ENCODE measurements at regions of chr7 and their contacts with region 1.

Region 1: DNA sequence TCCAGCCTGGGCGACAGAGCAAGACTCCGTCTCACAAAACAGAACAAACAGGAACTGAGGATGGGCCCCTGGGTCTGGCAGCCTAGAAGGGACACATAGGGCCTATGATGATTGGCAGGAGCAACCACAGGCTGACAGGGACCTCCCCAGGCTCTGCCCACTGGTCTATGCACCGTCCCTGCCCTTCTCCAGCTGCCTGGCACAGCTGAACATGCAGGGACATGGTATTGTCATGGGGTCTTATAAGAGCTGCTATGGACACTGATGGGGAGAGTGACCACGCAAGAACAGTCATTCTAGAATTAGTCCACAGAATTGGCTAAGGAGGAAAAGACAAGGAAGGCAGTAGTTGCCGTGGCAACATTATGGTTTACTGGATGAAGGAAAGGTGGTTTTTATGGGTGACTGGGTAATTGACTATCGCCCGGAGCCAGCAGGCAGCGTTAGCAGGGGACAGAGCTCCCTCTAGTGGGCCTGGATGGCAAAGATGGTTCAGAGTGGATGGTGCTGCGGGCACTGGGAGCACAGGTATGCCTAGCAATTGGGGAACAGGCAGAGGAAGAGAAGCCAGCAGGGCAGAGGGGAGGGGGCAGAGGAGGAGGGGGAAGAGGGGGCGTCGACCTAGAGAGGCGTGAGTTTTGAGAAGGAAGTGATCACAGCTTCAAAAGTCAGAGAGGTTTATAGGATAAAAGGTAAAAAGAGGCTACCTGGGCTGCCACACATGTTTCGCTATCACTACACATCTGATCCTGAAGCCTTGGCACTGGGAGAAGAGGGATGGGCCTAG is 7.8 kb upstream of the TRIM56 start:
- DNase-seq: peak; percentile 78 to 85
- ATAC-seq: peak; percentile 99 to 100
- H3K4me3 ChIP-seq: no peak overlapping the region
- H3K27ac ChIP-seq: 0 out of 6 replicates have a peak overlapping the region, but pooled peaks of 1 of the 2 experiments have one; percentile 12
- H3K4me1 ChIP-seq: no peaks in the 10 kb centered on the region
- CTCF ChIP-seq: peak; percentile 91
- EP300 ChIP-seq: no peak
- POLR2A ChIP-seq: no peak
- RAD21 ChIP-seq: peak; percentile 89 to 96

Region 2: DNA sequence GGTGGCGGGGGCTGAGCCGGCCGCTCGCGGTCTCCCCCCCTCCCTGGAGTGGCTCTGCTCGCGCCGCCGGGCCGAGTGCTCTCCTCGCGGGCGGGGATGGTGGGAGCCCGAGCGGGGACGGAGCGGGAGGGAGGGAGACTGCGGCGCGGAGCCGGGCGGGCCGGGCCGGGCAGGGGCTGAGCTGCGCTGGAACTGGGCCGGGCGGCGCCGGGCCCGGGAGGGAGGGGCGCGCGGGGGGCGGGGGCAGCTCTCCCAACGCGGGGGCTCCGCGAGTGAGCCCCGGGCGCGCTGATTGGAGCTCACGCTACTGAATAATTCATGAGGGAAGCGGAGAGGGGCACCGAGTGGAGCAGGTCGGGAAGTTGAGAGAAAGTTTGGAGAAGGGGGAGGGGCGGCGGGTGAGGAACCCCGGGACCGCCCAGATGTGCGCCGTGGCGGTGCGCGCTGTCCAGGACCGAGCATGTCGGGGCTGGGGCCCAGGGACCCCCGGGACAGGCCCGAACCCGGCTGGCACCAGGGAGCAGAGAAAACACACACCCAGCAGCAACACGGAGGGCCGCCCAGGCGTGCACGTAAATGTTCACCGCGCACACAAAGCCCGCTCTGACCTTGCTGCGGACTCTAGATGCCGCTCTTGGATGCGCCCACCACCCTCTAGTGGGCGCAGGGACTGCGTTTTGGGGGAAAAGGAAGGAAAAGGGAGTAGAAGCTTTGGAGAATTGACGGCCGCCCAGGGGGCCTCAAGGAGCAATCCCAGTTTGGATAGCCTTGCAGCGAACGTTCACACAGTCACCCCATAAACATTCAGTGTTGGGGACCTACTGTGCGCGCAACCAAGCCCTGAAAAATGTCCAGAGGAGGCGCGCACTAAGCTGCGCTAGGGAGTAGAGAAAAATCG is 249.9 kb before region 1 on chr7 and contains the start of gene EPHB4:
- CTCF ChIA-PET with region 1: no interaction called
- POLR2A ChIA-PET with region 1: interaction called, 13 read pairs
- DNase-seq: peak; percentile 73 to 91
- ATAC-seq: peak; percentile 84 to 92
- H3K4me3 ChIP-seq: peak within 1 kb of the TSS; percentile 100
- H3K27ac ChIP-seq: peak within 1 kb of the TSS; percentile 99
- H3K4me1 ChIP-seq: peaks cover 30% of the 10 kb centered on the region; the same call in 2 of the 3 replicates
- CTCF ChIP-seq: peak; percentile 64
- EP300 ChIP-seq: no peak
- POLR2A ChIP-seq: peak; percentile 75
- RAD21 ChIP-seq: peak; percentile 41 to 51
- polyA plus RNA-seq, gene EPHB4: 37.8 and 40.5 TPM in 2 replicates

Region 3: GRCh38 chr7:100896732-100897608 is 180.5 kb before region 1 on chr7:
- CTCF ChIA-PET with region 1: interaction called, 71 read pairs
- POLR2A ChIA-PET with region 1: no interaction called
- DNase-seq: no peak
- ATAC-seq: peak; percentile 45 to 50
- H3K4me3 ChIP-seq: peak overlapping the region; percentile 49
- H3K27ac ChIP-seq: peak overlapping the region; percentile 20 to 69; a peak in 4 of 6 replicates
- H3K4me1 ChIP-seq: peaks cover 19% of the 10 kb centered on the region
- CTCF ChIP-seq: peak; percentile 90
- EP300 ChIP-seq: no peak
- POLR2A ChIP-seq: no peak
- RAD21 ChIP-seq: peak; percentile 65 to 83

Region 4: DNA sequence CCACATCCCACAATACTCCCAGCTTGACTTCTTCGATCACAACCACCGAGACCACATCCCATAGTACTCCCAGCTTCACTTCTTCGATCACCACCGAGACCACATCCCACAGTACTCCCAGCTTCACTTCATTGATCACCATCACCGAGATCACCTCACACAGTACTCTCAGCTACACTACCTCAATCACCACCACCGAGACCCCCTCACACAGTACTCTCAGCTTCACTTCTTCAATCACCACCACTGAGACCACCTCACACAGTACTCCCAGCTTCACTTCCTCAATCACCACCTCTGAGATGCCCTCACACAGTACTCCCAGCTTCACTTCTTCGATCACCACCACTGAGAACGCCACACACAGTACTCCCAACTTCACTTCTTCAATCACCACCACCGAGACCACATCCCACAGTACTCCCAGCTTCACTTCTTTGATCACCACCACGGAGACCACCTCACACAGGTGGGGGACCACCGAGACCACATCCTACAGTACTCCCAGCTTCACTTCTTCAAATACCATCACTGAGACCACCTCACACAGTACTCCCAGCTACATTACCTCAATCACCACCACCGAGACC is 119.6 kb before region 1 on chr7:
- CTCF ChIA-PET with region 1: interaction called, 11 read pairs
- POLR2A ChIA-PET with region 1: no interaction called
- DNase-seq: peak in 1 of 2 experiments; percentile 35
- ATAC-seq: peak in 1 of 2 experiments; percentile 48; a peak in 3 of 6 replicates
- H3K4me3 ChIP-seq: no peak overlapping the region
- H3K27ac ChIP-seq: no peak overlapping the region
- H3K4me1 ChIP-seq: no peaks in the 10 kb centered on the region
- CTCF ChIP-seq: no peak
- EP300 ChIP-seq: no peak
- POLR2A ChIP-seq: 0 out of 2 replicates have a peak, but pooled peaks have one; percentile 9
- RAD21 ChIP-seq: no peak

Region 5: GRCh38 chr7:101066141-101066832 is 11.2 kb before region 1 on chr7:
- CTCF ChIA-PET with region 1: interaction called, 12 read pairs
- POLR2A ChIA-PET with region 1: no interaction called
- DNase-seq: no peak
- ATAC-seq: no peak
- H3K4me3 ChIP-seq: no peak overlapping the region
- H3K27ac ChIP-seq: no peak overlapping the region
- H3K4me1 ChIP-seq: no peaks in the 10 kb centered on the region
- CTCF ChIP-seq: no peak
- EP300 ChIP-seq: no peak
- POLR2A ChIP-seq: no peak
- RAD21 ChIP-seq: no peak

Region 6: GRCh38 chr7:101094416-101095375 is 17.2 kb after region 1 on chr7:
- CTCF ChIA-PET with region 1: interaction called, 19 read pairs
- POLR2A ChIA-PET with region 1: no interaction called
- DNase-seq: peak; percentile 60 to 79
- ATAC-seq: peak; percentile 83 to 85
- H3K4me3 ChIP-seq: no peak overlapping the region
- H3K27ac ChIP-seq: peak overlapping the region; percentile 50 to 94
- H3K4me1 ChIP-seq: peaks cover 35% of the 10 kb centered on the region
- CTCF ChIP-seq: peak; percentile 84
- EP300 ChIP-seq: no peak
- POLR2A ChIP-seq: no peak
- RAD21 ChIP-seq: peak; percentile 82 to 86

Region 7: DNA sequence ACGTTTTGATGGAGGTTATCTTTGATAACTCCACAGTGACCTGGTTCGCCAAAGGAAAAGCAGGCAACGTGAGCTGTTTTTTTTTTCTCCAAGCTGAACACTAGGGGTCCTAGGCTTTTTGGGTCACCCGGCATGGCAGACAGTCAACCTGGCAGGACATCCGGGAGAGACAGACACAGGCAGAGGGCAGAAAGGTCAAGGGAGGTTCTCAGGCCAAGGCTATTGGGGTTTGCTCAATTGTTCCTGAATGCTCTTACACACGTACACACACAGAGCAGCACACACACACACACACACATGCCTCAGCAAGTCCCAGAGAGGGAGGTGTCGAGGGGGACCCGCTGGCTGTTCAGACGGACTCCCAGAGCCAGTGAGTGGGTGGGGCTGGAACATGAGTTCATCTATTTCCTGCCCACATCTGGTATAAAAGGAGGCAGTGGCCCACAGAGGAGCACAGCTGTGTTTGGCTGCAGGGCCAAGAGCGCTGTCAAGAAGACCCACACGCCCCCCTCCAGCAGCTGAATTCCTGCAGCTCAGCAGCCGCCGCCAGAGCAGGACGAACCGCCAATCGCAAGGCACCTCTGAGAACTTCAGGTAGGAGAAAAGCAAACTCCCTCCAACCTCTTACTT is 49.3 kb after region 1 on chr7 and contains the start of gene SERPINE1:
- CTCF ChIA-PET with region 1: interaction called, 11 read pairs
- POLR2A ChIA-PET with region 1: interaction called, 6 read pairs
- DNase-seq: peak; percentile 98
- ATAC-seq: peak; percentile 73 to 78
- H3K4me3 ChIP-seq: peak within 1 kb of the TSS; percentile 63
- H3K27ac ChIP-seq: peak within 1 kb of the TSS; percentile 94 to 95
- H3K4me1 ChIP-seq: peaks cover 78% of the 10 kb centered on the region
- CTCF ChIP-seq: peak; percentile 29; the same call in 2 of the 3 replicates
- EP300 ChIP-seq: 0 out of 5 replicates have a peak, but pooled peaks of 1 of the 2 experiments have one; percentile 10
- POLR2A ChIP-seq: peak; percentile 98
- RAD21 ChIP-seq: peak in 1 of 2 experiments; percentile 8; a peak in 2 of 5 replicates
- polyA plus RNA-seq, gene SERPINE1: 300 and 355 TPM in 2 replicates